ENCODE measurements at regions of chr2 and their contacts with region 1.

Region 1: GRCh38 chr2:30711646-30712085 is 95.6 kb downstream of the CAPN13 start:
- DNase-seq: peak; percentile 79
- ATAC-seq: peak; percentile 79

Region 2: GRCh38 chr2:30165050-30165520 is 546.6 kb before region 1 on chr2:
- intact Hi-C with region 1: loop called (anchors 2 kb)
- DNase-seq: no peak
- ATAC-seq: peak; percentile 82

Region 3: DNA sequence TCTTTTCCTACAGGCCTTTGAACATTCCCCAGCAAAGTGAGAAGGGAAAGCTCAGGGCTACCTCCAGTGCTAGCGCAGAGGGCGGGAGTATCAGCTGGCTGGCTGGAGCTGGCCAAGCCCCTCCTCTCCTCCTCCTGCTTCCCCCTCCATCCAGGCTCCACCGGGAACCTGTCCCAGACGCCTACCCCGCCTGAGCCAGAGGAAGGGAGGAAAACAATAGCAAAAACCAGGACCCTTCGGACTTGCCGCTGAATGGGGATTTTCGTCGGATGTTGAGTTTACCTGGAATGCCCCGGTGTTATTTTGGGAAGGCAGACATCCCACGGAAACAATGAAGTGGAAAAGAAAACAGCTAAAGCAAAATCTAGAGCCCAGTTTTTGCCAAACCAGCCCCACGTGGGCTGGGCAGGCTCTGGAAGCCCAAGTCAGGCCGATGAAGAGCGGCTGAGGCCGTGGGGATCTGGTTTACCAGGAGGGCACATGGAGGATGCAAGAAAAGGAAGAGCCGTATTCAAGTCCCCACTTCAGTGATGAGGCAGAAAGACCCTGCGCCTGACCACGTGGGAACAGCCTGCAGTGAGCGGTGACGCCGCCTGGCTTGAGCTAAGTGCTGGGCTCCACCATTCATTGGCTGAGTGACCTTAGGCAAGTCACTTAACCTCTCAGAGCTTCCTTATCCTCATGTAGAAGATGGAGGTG is 365.0 kb before region 1 on chr2:
- intact Hi-C with region 1: loop called (anchors 5 kb)
- DNase-seq: peak; percentile 80
- ATAC-seq: peak; percentile 97

Region 4: GRCh38 chr2:30447149-30448045 is 264.3 kb before region 1 on chr2 and contains the start of gene LCLAT1:
- intact Hi-C with region 1: loop called (anchors 5 kb)
- DNase-seq: peak; percentile 97
- ATAC-seq: peak; percentile 95
- total RNA-seq, gene LCLAT1: 30.9 TPM

Region 5: GRCh38 chr2:31170071-31170698 is 458.5 kb after region 1 on chr2:
- intact Hi-C with region 1: loop called (anchors 1 kb)
- DNase-seq: peak; percentile 79
- ATAC-seq: peak; percentile 77

Region 6: GRCh38 chr2:31333527-31334183 is 622.0 kb after region 1 on chr2:
- intact Hi-C with region 1: loop called (anchors 1 kb)
- DNase-seq: peak; percentile 83
- ATAC-seq: peak; percentile 77

Region 7: DNA sequence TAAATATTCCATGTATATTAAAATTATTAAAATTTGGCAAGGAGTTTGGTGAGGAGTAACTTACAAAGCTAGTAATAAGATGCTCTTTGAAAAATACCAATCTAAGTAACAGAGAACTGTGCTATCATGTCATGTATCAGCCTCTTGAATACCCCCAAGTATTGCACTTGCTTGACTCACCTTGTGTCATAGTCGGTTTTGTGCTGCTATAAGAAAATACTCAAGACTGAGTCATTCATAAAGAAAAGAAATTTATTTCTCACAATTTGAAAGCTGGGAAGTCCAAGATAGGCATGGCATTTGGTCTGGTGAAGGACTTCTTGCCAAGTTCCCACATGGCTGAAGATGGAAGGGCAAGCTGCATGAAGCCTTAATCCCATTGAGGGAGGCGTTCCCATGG is 1119.9 kb after region 1 on chr2:
- intact Hi-C with region 1: loop called (anchors 10 kb)
- DNase-seq: no peak
- ATAC-seq: no peak

Measured in Right ventricle myocardium inferior (tissue), 1 donor.